ENCODE measurements at regions of chr15 and their contacts with region 1.

Region 1: GRCh38 chr15:89430530-89431341 is 65.6 kb downstream of the RHCG start:
- DNase-seq: peak; percentile 93
- ATAC-seq: peak; percentile 99
- H3K4me3 Mint-ChIP-seq: peak overlapping the region; percentile 72
- H3K27ac Mint-ChIP-seq: peak overlapping the region; percentile 27
- H3K4me1 Mint-ChIP-seq: peaks cover 8% of the 10 kb centered on the region
- H3K27me3 Mint-ChIP-seq: peaks cover 32% of the 10 kb centered on the region
- CTCF ChIP-seq: peak; percentile 96

Region 2: DNA sequence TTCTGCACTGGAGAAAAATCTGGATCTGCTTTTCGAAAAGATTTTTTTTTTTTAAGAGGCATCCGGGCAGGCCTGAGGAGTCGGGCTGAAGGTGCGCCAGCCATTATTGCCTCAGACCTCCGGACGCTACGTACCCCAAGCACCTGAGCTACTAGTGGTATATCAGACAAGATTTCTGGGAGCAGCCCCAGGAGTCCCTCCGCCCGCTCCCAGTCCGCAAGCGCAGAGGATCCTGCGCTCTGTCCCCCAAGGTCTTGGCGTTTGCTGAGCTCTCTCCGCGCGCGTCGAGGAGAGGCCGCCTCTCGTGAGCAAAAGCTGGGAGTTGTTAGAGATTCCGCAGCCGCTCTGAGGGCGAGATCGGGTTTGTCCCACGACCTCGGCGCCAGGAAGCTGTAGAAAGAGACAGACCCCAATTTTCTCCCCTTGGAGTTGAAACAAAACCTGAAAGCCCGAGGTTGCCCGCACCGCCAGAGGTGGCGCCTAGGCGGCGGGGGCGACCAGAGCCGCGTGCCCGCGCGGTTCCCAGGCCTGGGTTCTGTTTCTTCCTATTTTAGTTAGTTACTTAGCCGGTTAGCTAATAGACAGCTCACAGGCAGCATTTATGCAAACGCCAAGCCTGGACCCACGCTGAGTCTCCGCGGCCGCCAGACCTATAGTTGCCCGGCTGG is 23.7 kb before region 1 on chr15:
- CTCF ChIA-PET with region 1: interaction called, 18 read pairs
- POLR2A ChIA-PET with region 1: no interaction called
- intact Hi-C with region 1: no loop called
- DNase-seq: peak; percentile 31
- ATAC-seq: no peak
- H3K4me3 Mint-ChIP-seq: no peak overlapping the region
- H3K27ac Mint-ChIP-seq: no peak overlapping the region
- H3K4me1 Mint-ChIP-seq: peaks cover 36% of the 10 kb centered on the region
- H3K27me3 Mint-ChIP-seq: peaks cover 90% of the 10 kb centered on the region
- CTCF ChIP-seq: peak; percentile 26

Region 3: DNA sequence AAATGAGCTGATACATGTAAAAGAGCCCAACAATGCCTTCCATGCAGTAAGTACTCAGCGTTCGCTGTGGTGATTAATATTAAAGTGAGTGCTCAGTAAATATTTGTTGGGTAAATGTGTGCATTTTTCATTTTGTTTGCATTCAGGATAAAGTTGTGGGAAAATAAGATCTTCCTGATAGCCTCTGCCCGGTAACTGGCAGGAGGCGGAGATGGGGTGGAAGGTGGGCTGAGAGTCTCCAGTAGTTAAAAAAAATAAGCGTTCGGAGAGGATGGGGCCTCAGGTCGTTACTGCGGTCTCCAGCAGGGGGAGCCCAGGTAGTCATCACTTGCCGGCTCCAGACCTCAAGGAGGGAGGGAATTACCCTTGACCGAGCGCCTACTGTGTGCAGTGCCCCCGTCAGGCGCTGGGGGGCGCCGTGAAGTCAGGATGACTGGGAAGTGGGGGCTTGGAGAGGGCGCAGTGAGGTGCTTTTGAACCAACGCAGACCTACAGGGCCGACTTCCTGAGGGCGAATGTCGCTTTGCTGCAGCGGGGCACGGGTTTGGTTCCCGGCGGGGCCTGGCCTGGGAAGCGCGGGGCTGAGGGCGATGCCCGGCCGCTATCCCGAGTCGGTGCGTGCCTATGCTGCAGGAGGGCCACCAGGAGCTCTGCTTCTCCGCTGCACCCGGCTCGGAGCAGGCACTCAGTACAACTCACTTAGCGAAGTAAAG is 14.4 kb before region 1 on chr15:
- CTCF ChIA-PET with region 1: interaction called, 55 read pairs
- POLR2A ChIA-PET with region 1: no interaction called
- intact Hi-C with region 1: no loop called
- DNase-seq: peak; percentile 94
- ATAC-seq: peak; percentile 99
- H3K4me3 Mint-ChIP-seq: no peak overlapping the region
- H3K27ac Mint-ChIP-seq: no peak overlapping the region
- H3K4me1 Mint-ChIP-seq: peaks cover 7% of the 10 kb centered on the region
- H3K27me3 Mint-ChIP-seq: peaks cover 77% of the 10 kb centered on the region
- CTCF ChIP-seq: peak; percentile 98

Region 4: DNA sequence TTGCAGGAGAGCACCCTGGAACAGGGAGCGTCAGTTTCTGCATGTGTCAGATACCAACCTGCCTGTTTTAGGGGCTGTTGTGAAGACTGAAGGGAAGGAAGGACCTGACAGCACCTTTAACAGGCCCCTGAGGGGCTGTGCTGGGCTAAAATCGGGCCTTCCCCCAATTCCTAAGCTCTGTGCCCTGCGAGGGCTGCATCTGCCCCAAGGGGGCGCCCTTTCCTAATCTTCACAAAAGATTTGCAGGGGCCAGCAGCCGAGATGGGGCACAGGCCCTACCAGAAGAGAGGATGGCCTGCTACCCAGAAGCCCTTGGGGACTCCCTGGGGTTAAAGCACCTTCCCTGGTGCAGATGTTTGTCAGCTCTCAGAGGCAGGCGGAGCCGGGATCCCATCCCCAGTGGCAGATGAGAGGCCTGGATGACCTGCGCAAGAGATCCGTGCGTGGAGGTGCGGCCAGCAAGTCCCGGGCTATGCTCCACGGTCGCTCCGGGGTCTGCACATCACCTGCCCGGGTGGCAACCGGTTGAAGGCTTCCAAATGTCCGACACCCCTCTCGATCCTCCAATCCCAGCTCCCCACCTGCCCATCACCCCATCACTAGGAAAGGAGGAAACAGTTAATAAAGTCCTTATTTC is 12.1 kb after region 1 on chr15:
- CTCF ChIA-PET with region 1: interaction called, 13 read pairs
- POLR2A ChIA-PET with region 1: interaction called, 3 read pairs
- intact Hi-C with region 1: no loop called
- DNase-seq: peak; percentile 81
- ATAC-seq: peak; percentile 92
- H3K4me3 Mint-ChIP-seq: no peak overlapping the region
- H3K27ac Mint-ChIP-seq: no peak overlapping the region
- H3K4me1 Mint-ChIP-seq: no peaks in the 10 kb centered on the region
- H3K27me3 Mint-ChIP-seq: peaks cover 33% of the 10 kb centered on the region
- CTCF ChIP-seq: peak; percentile 85